GM12878 (cell line): ENCODE measurements at regions of chr2 and their contacts with region 1.

Region 1: GRCh38 chr2:165573534-165574461 is 104.3 kb downstream of the CSRNP3 start:
- DNase-seq: no peak
- ATAC-seq: peak; percentile 66
- H3K4me3 ChIP-seq: no peak overlapping the region
- H3K27ac ChIP-seq: no peak overlapping the region
- H3K4me1 ChIP-seq: no peaks in the 10 kb centered on the region
- H3K27me3 ChIP-seq: no peaks in the 10 kb centered on the region
- CTCF ChIP-seq: no peak
- EP300 ChIP-seq: no peak
- POLR2A ChIP-seq: no peak
- RAD21 ChIP-seq: no peak

Region 2: GRCh38 chr2:165587335-165587938 is 13.6 kb after region 1 on chr2:
- CTCF ChIA-PET with region 1: interaction called, 12 read pairs
- POLR2A ChIA-PET with region 1: interaction called, 4 read pairs
- RAD21 ChIA-PET with region 1: interaction called, 12 read pairs
- SMC1A ChIA-PET with region 1: interaction called, 37 read pairs
- in situ Hi-C with region 1: no loop called
- intact Hi-C with region 1: no loop called
- DNase-seq: peak; percentile 32
- ATAC-seq: peak; percentile 90
- H3K4me3 ChIP-seq: 0 out of 2 replicates have a peak overlapping the region, but pooled peaks have one; percentile 19
- H3K27ac ChIP-seq: no peak overlapping the region; the same call in 1 of the 2 replicates
- H3K4me1 ChIP-seq: peaks cover 5% of the 10 kb centered on the region; the same call in 1 of the 2 replicates
- H3K27me3 ChIP-seq: no peaks in the 10 kb centered on the region
- CTCF ChIP-seq: no peak
- EP300 ChIP-seq: no peak
- POLR2A ChIP-seq: no peak
- RAD21 ChIP-seq: no peak

Region 3: GRCh38 chr2:165594935-165595255 is 21.1 kb after region 1 on chr2:
- CTCF ChIA-PET with region 1: interaction called, 3 read pairs
- POLR2A ChIA-PET with region 1: interaction called, 6 read pairs
- RAD21 ChIA-PET with region 1: interaction called, 15 read pairs
- SMC1A ChIA-PET with region 1: interaction called, 30 read pairs
- in situ Hi-C with region 1: no loop called
- intact Hi-C with region 1: no loop called
- DNase-seq: peak; percentile 77
- ATAC-seq: peak; percentile 84
- H3K4me3 ChIP-seq: no peak overlapping the region
- H3K27ac ChIP-seq: no peak overlapping the region
- H3K4me1 ChIP-seq: no peaks in the 10 kb centered on the region
- H3K27me3 ChIP-seq: no peaks in the 10 kb centered on the region
- CTCF ChIP-seq: no peak
- EP300 ChIP-seq: no peak; a peak in 1 of 4 replicates
- POLR2A ChIP-seq: no peak
- RAD21 ChIP-seq: no peak

Region 4: GRCh38 chr2:165627470-165627869 is 53.7 kb after region 1 on chr2:
- CTCF ChIA-PET with region 1: interaction called, 4 read pairs
- POLR2A ChIA-PET with region 1: interaction called, 3 read pairs
- RAD21 ChIA-PET with region 1: interaction called, 3 read pairs
- SMC1A ChIA-PET with region 1: interaction called, 15 read pairs
- in situ Hi-C with region 1: no loop called
- intact Hi-C with region 1: no loop called
- DNase-seq: no peak
- ATAC-seq: peak; percentile 74
- H3K4me3 ChIP-seq: no peak overlapping the region
- H3K27ac ChIP-seq: no peak overlapping the region
- H3K4me1 ChIP-seq: no peaks in the 10 kb centered on the region
- H3K27me3 ChIP-seq: no peaks in the 10 kb centered on the region
- CTCF ChIP-seq: no peak
- EP300 ChIP-seq: no peak
- POLR2A ChIP-seq: no peak
- RAD21 ChIP-seq: no peak